MCF 10A (cell line): ENCODE measurements at regions of chr2 and their contacts with region 1.

Region 1: DNA sequence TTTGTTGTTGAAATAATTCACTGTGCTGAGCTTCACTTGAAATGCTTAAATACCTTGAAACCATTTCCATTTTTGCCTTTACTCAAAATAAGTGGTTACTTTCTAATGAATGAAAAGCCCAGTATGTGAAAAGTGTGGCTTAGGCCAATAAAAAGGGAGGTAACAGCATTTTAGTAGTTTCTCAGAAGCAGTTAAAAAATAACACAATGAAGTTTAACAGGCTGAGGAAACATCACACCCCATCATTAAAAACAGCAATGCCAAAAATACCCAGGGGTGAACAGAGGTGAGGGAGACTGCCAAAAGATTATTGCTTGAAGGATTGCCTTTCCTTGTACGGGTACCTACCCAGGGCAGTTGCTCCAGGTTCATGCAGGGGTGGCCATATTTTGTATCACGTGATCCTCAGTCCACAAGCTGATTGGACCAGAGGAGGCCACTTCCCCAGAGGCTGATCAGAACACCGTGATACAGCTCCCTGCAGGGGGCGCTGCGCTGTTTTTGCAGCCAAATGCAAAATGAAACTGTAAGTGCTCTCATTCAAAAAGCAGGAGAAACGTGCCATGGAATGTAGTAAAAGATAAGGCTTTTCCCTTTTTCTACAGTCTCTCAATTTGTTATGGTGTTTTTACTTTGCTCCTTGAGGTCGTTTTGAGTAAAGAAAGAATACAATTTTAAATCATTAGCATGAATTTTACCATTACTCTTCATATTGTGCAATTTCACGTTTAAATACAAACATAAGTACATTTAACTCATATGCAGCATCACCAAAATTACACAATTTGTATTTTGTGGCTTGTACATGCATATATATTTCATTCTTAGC is 70.2 kb upstream of the SH3BP4 start:
- DNase-seq: peak; percentile 95
- H3K4me3 Mint-ChIP-seq: peak overlapping the region; percentile 41
- H3K27ac Mint-ChIP-seq: no peak overlapping the region
- H3K4me1 Mint-ChIP-seq: peaks cover 9% of the 10 kb centered on the region
- H3K27me3 Mint-ChIP-seq: no peaks in the 10 kb centered on the region
- CTCF ChIP-seq: peak; percentile 67

Region 2: GRCh38 chr2:234981197-234982117 is 99.8 kb after region 1 on chr2:
- CTCF ChIA-PET with region 1: interaction called, 4 read pairs
- POLR2A ChIA-PET with region 1: interaction called, 14 read pairs
- intact Hi-C with region 1: no loop called
- DNase-seq: peak; percentile 95
- H3K4me3 Mint-ChIP-seq: peak overlapping the region; percentile 71
- H3K27ac Mint-ChIP-seq: peak overlapping the region; percentile 90
- H3K4me1 Mint-ChIP-seq: peaks cover 45% of the 10 kb centered on the region
- H3K27me3 Mint-ChIP-seq: no peaks in the 10 kb centered on the region
- CTCF ChIP-seq: no peak

Region 3: GRCh38 chr2:235026649-235027557 is 145.3 kb after region 1 on chr2:
- CTCF ChIA-PET with region 1: no interaction called
- POLR2A ChIA-PET with region 1: interaction called, 14 read pairs
- intact Hi-C with region 1: loop called (anchors 2 kb)
- DNase-seq: peak; percentile 99
- H3K4me3 Mint-ChIP-seq: peak overlapping the region; percentile 71
- H3K27ac Mint-ChIP-seq: peak overlapping the region; percentile 93
- H3K4me1 Mint-ChIP-seq: peaks cover 59% of the 10 kb centered on the region
- H3K27me3 Mint-ChIP-seq: no peaks in the 10 kb centered on the region
- CTCF ChIP-seq: no peak

Region 4: DNA sequence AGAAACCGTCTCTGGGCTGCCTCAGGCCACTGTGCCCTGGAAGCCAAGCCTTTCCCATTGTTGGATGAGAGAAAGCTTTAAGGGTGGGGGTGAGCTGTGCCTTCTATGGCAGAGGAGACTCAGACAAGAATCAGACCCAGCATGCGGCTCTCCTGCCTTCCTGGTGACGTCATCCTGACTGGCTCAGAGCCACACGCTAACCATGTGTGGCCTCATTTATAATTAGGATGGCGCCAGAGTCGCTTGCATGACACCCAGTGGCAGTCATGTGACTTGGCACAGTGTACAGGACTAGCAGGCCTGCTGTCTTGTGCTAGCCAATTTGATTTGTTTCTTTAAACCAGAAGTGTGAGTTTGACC is 169.3 kb after region 1 on chr2:
- CTCF ChIA-PET with region 1: no interaction called
- POLR2A ChIA-PET with region 1: interaction called, 4 read pairs
- intact Hi-C with region 1: loop called (anchors 1 kb)
- DNase-seq: peak; percentile 95
- H3K4me3 Mint-ChIP-seq: no peak overlapping the region
- H3K27ac Mint-ChIP-seq: peak overlapping the region; percentile 3
- H3K4me1 Mint-ChIP-seq: peaks cover 32% of the 10 kb centered on the region
- H3K27me3 Mint-ChIP-seq: no peaks in the 10 kb centered on the region
- CTCF ChIP-seq: peak; percentile 7